ENCODE measurements at regions of chr15 and their contacts with region 1.

Region 1: DNA sequence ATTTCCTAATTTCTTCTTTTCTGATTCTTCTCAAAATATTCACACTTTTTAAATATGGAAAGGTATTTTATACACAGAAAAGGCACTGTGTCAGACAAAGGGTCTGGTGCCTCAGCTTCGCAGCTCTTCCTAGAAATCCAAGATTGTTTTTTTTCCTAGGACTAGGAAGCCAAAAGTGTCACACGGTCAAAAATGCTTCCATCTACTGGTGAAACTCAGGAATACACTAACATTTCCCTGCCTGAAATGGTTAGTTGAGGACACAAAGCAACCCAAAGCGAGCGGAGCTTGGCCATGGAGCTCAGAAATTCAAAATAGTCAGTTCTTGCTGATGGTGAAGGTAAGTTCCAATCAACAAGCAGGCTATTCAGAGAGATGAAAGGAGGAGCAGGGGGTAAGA is 426.5 kb upstream of the RASGRP1 start:
- DNase-seq: peak; percentile 83
- H3K4me3 ChIP-seq: no peak overlapping the region
- H3K27ac ChIP-seq: peak overlapping the region; percentile 2
- H3K4me1 ChIP-seq: peaks cover 34% of the 10 kb centered on the region
- H3K27me3 ChIP-seq: no peaks in the 10 kb centered on the region
- CTCF ChIP-seq: peak; percentile 50 to 51
- POLR2A ChIP-seq: no peak

Region 2: GRCh38 chr15:38671675-38672254 is 319.4 kb before region 1 on chr15:
- CTCF ChIA-PET with region 1: no interaction called
- POLR2A ChIA-PET with region 1: no interaction called
- dilution Hi-C with region 1: no loop called
- intact Hi-C with region 1: no loop called
- DNase-seq: no peak
- H3K4me3 ChIP-seq: no peak overlapping the region
- H3K27ac ChIP-seq: no peak overlapping the region
- H3K4me1 ChIP-seq: no peaks in the 10 kb centered on the region
- H3K27me3 ChIP-seq: peaks cover 22 to 33% of the 10 kb centered on the region in 2 experiments
- CTCF ChIP-seq: no peak
- POLR2A ChIP-seq: no peak

Region 3: DNA sequence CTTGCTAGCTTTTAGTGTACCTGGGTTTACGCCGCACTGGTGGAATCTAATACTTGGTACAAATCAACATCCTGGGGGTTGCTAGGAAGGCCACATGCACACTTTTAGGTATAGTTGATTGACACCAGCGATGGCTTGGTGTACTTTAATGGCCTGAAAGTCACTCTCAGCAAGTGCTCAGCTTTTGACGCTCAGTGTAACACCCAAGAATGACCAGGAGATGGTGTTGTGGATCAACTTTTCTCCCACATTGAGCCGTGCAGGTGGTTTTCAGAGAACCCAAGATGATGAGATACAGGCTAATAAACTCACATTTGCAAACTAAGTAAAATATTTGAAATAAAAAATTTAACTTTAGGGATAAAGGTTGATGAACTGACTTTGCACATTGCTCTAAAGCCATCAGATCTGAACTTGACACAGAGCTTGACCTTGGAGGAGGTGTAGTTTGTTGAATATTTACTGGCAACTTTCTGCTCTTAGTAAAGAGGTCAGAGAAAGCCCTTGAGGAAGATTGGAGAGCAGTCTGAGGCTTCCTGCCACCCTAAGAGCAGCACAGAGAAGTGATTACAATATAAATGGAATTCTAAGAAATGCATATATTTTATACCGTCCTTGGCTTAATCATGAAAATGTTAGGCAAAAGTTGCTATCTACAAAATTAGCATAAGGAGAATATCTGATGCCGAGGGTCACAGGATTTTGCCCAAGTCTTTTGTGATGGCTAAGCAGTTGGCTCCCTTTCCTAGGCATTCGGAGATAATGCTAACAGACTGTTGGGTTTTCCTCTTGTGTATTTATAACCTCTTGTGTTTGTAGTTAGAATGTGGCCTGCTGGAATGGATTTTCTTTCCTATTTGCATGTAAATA is 283.1 kb before region 1 on chr15:
- CTCF ChIA-PET with region 1: interaction called, 24 read pairs
- POLR2A ChIA-PET with region 1: no interaction called
- dilution Hi-C with region 1: no loop called
- intact Hi-C with region 1: loop called (anchors 1 kb)
- DNase-seq: peak; percentile 87
- H3K4me3 ChIP-seq: no peak overlapping the region
- H3K27ac ChIP-seq: no peak overlapping the region
- H3K4me1 ChIP-seq: peaks cover 10% of the 10 kb centered on the region
- H3K27me3 ChIP-seq: no peaks in the 10 kb centered on the region
- CTCF ChIP-seq: peak; percentile 71 to 78
- POLR2A ChIP-seq: no peak

Region 4: DNA sequence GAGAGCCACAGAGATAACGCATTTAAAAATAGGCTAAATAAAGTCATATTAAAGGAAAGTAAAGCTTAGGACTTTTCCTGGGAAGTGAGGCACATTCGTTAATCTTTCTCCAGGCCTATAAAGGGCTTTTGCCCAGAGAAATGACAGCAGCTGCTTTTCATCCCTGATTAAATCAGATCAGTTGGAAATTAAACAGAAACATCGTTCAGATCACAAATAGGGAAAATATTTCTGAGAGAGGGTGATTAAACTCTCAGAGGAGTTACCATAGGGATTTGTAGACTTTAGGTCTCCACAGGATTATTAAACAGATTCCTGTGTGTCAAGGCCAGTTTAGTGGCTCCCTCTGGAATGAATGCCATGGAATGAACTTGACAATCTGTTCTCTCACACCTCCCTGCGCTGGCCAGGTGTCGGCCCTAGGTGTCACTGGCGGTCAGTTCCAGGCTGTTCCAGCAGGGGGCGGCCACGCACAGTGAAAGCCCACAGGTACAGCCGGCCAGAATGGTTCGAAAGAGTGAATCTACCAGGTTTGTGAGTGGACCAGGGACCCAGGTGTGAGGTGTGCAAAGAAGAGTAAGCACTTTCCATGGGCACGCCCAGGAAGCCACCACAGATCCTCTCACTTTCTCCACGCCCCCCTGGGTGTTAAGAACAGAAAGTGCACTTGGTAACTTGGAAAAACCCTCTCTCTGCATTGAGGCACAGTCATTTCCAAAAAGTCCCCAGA is 173.5 kb before region 1 on chr15:
- CTCF ChIA-PET with region 1: interaction called, 53 read pairs
- POLR2A ChIA-PET with region 1: no interaction called
- dilution Hi-C with region 1: no loop called
- intact Hi-C with region 1: loop called (anchors 1 kb)
- DNase-seq: peak; percentile 86
- H3K4me3 ChIP-seq: no peak overlapping the region
- H3K27ac ChIP-seq: peak overlapping the region; percentile 36
- H3K4me1 ChIP-seq: peaks cover 17% of the 10 kb centered on the region
- H3K27me3 ChIP-seq: no peaks in the 10 kb centered on the region
- CTCF ChIP-seq: peak; percentile 98 to 99
- POLR2A ChIP-seq: no peak

Region 5: DNA sequence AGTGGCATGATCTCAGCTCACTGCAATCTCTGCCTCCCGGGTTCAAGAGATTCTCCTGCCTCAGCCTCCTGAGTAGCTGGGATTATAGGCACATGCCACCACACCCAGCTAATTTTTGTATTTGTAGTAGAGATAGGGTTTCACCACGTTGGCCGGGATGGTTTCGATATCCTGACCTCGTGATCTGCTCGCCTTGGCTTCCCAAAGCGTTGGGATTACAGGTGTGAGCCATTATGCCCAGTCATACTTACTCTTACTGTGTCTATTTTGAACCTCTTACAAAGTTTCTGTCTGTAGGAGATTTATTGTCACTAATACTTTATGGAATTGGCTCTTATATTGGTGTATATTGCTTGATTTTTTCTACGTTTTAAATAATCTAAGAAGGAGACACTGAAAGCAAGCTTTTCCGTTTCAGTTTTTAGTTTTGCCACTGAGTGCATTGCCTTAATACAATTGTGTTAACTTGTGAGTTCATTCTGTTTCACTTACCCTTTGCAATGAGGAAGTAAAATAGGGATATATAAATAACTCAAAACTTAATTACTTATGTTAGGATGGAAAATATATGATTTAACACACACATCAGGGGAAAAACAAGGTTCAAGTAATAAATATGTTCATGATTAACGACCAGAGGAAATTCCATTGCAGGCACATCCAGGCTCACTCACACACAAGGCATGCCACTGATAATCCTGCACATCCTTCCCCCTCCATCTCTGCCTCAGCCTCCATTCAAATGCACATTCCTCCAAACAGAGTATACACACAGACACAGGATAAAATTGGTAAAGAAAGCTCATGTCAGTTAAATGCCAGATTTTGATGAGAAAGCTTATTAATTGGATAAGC is 147.2 kb before region 1 on chr15:
- CTCF ChIA-PET with region 1: interaction called, 40 read pairs
- POLR2A ChIA-PET with region 1: interaction called, 19 read pairs
- dilution Hi-C with region 1: no loop called
- intact Hi-C with region 1: loop called (anchors 1 kb)
- DNase-seq: peak; percentile 95
- H3K4me3 ChIP-seq: peak overlapping the region in 1 of 3 experiments; percentile 15
- H3K27ac ChIP-seq: peak overlapping the region; percentile 98
- H3K4me1 ChIP-seq: peaks cover 41% of the 10 kb centered on the region
- H3K27me3 ChIP-seq: no peaks in the 10 kb centered on the region
- CTCF ChIP-seq: no peak
- POLR2A ChIP-seq: peak; percentile 61

Region 6: DNA sequence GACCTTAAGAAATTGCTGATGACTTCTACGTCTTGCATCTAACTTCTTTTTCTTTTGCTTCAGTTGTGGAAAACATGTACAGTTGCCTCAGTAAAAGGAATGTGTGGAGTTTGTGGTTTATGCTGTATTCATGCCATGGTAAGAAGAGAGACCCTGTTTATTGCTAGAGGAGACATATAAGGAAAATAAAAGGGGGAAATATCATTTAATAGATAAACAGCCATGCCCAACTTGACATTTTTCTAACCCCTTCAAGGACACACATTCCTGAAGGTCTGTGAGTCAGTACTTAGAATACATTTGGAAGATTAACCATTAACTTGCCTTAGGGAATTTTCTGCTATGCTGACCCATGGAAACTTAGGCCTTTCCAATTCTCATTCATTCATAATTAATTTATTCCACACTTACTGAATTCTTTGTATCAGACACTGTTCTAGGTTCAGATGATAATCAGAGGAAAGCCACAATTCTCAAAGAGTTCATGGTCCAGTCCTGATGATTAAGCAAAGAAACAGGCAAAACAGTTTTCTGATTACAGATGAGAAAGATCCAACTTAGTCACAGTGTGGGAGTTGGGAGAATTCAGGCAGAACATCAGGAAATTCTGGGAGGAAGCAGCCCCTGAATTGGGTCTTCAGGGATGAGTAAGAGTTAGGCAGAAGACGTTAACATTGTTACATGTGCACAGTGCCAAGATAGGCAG is 96.7 kb before region 1 on chr15:
- CTCF ChIA-PET with region 1: interaction called, 12 read pairs
- POLR2A ChIA-PET with region 1: interaction called, 3 read pairs
- dilution Hi-C with region 1: no loop called
- intact Hi-C with region 1: loop called (anchors 1 kb)
- DNase-seq: peak; percentile 91
- H3K4me3 ChIP-seq: no peak overlapping the region
- H3K27ac ChIP-seq: peak overlapping the region; percentile 92
- H3K4me1 ChIP-seq: peaks cover 49% of the 10 kb centered on the region
- H3K27me3 ChIP-seq: no peaks in the 10 kb centered on the region
- CTCF ChIP-seq: no peak
- POLR2A ChIP-seq: no peak

Region 7: GRCh38 chr15:38930851-38931537 is 60.1 kb before region 1 on chr15:
- CTCF ChIA-PET with region 1: no interaction called
- POLR2A ChIA-PET with region 1: no interaction called
- dilution Hi-C with region 1: no loop called
- intact Hi-C with region 1: no loop called
- DNase-seq: no peak
- H3K4me3 ChIP-seq: no peak overlapping the region
- H3K27ac ChIP-seq: no peak overlapping the region
- H3K4me1 ChIP-seq: no peaks in the 10 kb centered on the region
- H3K27me3 ChIP-seq: no peaks in the 10 kb centered on the region
- CTCF ChIP-seq: no peak
- POLR2A ChIP-seq: no peak

Region 8: DNA sequence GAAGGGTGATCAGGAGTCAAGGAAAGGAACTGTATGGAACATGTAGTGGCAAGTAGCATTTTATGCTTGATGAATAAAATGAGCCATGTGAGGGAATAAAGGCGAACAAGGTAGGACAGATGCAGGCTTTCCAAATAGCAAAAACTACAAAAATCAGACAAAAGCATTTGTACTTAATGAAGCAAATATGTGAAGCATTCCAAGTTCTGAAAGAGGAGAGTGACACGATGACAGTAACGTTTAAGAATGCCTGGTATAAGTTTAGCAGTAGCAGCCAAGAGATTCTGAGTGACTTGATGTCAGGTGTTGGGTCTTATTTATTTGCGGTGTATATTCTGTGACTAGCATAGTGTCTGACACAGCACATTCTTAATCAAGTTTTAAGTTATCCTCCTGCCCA is 18.3 kb before region 1 on chr15:
- CTCF ChIA-PET with region 1: interaction called, 11 read pairs
- POLR2A ChIA-PET with region 1: no interaction called
- dilution Hi-C with region 1: no loop called
- intact Hi-C with region 1: no loop called
- DNase-seq: no peak
- H3K4me3 ChIP-seq: no peak overlapping the region
- H3K27ac ChIP-seq: no peak overlapping the region
- H3K4me1 ChIP-seq: no peaks in the 10 kb centered on the region
- H3K27me3 ChIP-seq: no peaks in the 10 kb centered on the region
- CTCF ChIP-seq: no peak
- POLR2A ChIP-seq: no peak

Region 9: DNA sequence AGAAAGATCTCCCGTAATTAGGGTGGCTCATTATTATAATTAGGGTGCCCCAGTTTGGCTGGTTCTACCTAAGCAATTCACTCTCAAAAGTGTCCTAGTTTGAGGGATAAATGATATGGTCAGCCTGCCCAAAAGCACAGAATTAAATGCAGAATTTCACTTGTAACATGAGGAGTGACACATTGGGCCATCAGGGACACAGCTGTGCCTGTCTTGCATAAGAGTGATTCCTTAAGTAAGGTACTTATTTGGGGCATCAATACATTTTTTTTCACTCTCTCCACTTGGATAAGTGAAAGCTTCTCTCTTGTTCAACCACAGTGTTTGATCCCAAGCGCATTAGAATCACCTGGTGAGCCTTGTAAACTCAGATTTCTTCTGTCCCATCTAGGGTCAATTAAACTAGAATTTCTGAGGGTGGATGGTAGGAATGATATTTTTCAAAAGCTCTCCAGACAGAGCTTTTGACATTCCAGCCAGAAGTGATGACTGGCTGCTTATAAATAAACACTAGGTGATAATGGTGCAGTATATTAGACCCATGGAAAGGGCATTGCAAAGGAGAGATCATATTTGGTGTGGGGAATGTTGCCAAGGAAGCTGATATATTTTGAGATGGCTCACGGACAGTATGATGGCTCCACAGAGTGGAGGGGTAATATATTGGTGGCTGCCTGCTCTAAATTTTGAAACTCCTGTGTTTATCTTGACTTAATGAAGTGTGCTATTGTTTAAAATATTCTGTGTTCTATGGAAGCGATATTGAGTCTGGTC is 31.6 kb after region 1 on chr15:
- CTCF ChIA-PET with region 1: no interaction called
- POLR2A ChIA-PET with region 1: no interaction called
- dilution Hi-C with region 1: no loop called
- intact Hi-C with region 1: no loop called
- DNase-seq: no peak
- H3K4me3 ChIP-seq: no peak overlapping the region
- H3K27ac ChIP-seq: no peak overlapping the region
- H3K4me1 ChIP-seq: peaks cover 4% of the 10 kb centered on the region
- H3K27me3 ChIP-seq: no peaks in the 10 kb centered on the region
- CTCF ChIP-seq: no peak
- POLR2A ChIP-seq: no peak

Region 10: DNA sequence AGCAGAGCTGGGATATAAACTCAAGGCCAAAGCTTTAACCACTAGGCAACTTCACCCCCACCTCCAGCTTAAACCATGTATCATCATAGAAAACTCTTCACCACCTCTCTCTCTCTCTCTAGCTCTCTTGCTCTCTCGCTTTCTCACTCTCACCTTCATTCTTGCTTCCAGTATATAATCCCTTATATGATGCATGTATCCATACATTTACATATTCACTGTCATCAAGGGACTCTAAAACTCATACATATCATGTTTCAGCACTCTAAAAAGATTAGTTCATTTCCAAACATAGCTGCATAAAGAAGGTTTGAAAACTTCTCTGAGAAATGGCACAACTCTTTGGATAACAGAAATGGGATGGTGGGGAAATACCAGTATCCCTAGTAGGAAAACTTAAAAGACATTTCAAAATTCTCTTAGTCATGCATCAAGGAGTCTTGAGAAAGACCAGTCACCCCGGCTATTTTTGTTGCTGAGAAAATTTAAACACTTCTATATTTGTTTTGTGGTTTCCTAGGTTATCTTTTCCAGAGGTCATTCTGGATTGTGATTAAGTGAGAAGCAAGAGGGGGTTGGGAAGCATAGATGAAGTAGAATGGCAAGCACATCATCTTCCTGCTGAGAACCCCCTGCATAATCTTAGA is 142.0 kb after region 1 on chr15:
- CTCF ChIA-PET with region 1: interaction called, 11 read pairs
- POLR2A ChIA-PET with region 1: interaction called, 12 read pairs
- dilution Hi-C with region 1: no loop called
- intact Hi-C with region 1: loop called (anchors 1 kb)
- DNase-seq: peak; percentile 64
- H3K4me3 ChIP-seq: no peak overlapping the region
- H3K27ac ChIP-seq: peak overlapping the region; percentile 48
- H3K4me1 ChIP-seq: peaks cover 53% of the 10 kb centered on the region
- H3K27me3 ChIP-seq: no peaks in the 10 kb centered on the region
- CTCF ChIP-seq: no peak
- POLR2A ChIP-seq: no peak

Measured in endothelial cell of umbilical vein (primary cell).